H1 (cell line): ENCODE measurements at regions of chr1 and their contacts with region 1.

Region 1: DNA sequence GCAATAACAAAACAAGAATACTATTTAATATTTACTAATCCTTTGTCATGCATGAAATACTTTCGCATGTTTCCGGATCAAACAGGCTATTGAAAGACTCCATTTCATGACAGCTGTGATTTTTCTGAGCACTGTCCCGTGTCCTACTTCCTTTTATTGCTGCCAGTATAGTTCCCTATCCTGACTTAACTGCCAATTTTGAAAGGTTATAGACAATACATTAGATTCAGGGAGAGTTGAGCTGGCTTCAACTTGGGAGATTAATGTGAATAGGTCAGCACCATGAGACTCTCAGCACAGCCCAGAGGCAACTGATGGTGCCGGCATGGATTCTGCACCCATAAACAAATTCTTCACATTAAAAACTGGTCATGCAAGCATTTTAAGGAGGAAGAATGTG is 225.8 kb downstream of the VAV3 start:
- DNase-seq: no peak
- H3K4me3 ChIP-seq: no peak overlapping the region
- H3K27ac ChIP-seq: no peak overlapping the region
- H3K4me1 ChIP-seq: peaks cover 0 to 7% (median 0%) of the 10 kb centered on the region in 4 experiments; a peak in 1 of 7 replicates
- H3K27me3 ChIP-seq: no peaks in the 10 kb centered on the region
- CTCF ChIP-seq: no peak
- EP300 ChIP-seq: no peak
- POLR2A ChIP-seq: no peak
- RAD21 ChIP-seq: no peak

Region 2: DNA sequence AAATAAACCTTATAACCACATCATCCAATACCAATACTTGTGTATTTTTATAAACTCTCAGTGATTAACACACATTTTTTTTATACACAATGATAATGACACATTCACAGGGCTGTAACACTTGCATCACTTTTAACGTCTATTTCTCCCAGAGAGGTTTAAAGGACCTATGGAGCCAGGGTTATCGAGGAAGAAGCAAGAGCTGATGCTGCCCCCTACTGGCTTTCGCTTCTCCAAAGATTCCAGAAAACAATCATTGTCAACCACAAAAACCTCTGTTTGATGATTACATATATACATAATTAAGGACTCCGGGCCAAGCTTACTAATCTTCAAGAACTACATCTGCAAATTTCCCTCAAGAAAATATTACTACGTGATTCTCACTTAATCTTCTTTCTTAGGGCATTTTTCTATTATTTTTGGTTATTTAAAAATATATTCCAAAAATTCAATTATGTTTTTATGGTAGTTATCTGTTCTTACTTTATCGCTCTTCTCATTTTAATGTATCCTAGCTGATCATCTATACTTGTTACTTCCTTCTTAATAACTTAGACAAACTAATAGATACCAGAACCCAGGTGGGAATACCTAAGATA is 11.2 kb after region 1 on chr1:
- CTCF ChIA-PET with region 1: interaction called, 22 read pairs
- POLR2A ChIA-PET with region 1: interaction called, 3 read pairs
- DNase-seq: peak in 1 of 2 experiments; percentile 80
- H3K4me3 ChIP-seq: no peak overlapping the region
- H3K27ac ChIP-seq: no peak overlapping the region
- H3K4me1 ChIP-seq: peaks cover 0 to 4% (median 0%) of the 10 kb centered on the region in 4 experiments; a peak in 1 of 7 replicates
- H3K27me3 ChIP-seq: no peaks in the 10 kb centered on the region
- CTCF ChIP-seq: peak in 2 of 3 experiments; percentile 61 to 64; a peak in 3 of 4 replicates
- EP300 ChIP-seq: no peak
- POLR2A ChIP-seq: no peak
- RAD21 ChIP-seq: peak; percentile 78 to 83